GM12878 (cell line): ENCODE measurements at regions of chr9 and their contacts with region 1.

Region 1: GRCh38 chr9:123102375-123103110 is 69.1 kb downstream of the GPR21 start:
- DNase-seq: no peak
- ATAC-seq: 0 out of 3 replicates have a peak, but pooled peaks have one; percentile 20
- H3K4me3 ChIP-seq: no peak overlapping the region
- H3K27ac ChIP-seq: no peak overlapping the region
- H3K4me1 ChIP-seq: no peaks in the 10 kb centered on the region
- H3K27me3 ChIP-seq: no peaks in the 10 kb centered on the region
- CTCF ChIP-seq: peak; percentile 17 to 34 (median 22); a peak in 3 of 6 replicates
- EP300 ChIP-seq: no peak
- POLR2A ChIP-seq: no peak
- RAD21 ChIP-seq: peak; percentile 42

Region 2: DNA sequence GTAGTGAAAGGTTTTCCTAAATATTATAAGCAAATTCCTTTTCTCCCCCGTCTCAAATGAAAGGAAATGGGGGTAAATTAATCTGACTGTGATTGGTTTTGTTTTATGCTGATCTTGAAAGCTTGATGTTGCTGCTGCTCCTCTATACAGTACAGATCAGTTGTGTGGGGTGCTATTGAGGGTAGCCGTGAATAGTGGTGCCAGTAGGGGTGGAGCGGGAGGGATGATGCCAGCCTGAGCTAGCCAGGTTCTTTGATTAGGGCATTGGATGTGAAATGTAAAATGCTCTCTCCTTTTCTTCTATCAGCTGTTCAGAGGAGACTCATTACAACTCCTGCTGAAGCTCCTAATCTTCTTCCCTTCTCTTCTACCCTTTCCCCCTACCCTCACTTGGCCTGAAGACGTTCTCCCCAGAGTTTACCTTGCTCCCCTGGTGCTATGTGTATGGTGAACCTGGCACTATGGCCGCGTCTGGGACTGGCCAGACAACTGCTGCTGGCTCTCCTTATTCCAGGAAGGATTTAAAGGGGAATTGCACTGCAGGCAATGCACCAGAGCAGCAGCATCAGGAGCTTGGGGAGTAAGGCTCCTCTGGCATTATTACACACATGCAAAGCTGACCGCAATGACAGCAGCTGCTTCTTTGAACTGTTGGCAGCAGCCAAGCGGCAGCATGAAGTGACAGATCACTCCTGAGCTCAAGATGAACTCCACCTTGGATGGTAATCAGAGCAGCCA is 68.5 kb before region 1 on chr9:
- CTCF ChIA-PET with region 1: no interaction called
- POLR2A ChIA-PET with region 1: no interaction called
- RAD21 ChIA-PET with region 1: no interaction called
- SMC1A ChIA-PET with region 1: no interaction called
- in situ Hi-C with region 1: no loop called
- intact Hi-C with region 1: no loop called
- DNase-seq: no peak
- ATAC-seq: no peak
- H3K4me3 ChIP-seq: no peak overlapping the region
- H3K27ac ChIP-seq: no peak overlapping the region
- H3K4me1 ChIP-seq: no peaks in the 10 kb centered on the region
- H3K27me3 ChIP-seq: no peaks in the 10 kb centered on the region
- CTCF ChIP-seq: no peak
- EP300 ChIP-seq: no peak
- POLR2A ChIP-seq: no peak
- RAD21 ChIP-seq: no peak

Region 3: DNA sequence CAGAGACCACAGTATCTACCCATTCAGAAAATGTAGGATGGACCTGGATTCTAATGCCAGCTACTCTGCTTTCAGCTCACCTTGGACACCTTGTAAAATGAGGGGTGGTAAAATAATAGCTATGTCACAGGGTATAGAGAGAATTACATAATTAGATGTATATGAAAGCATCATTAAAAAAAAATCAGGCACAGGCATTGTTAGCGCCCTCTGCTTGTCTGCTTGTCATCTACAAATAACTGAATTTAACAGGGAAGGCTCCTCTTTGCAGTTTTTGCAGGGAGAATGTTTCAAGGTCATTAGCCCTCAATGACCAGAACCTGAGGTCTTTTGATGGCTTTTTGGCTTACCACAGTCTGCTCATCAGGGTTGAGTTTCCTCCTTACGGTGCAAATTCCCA is 11.1 kb before region 1 on chr9:
- CTCF ChIA-PET with region 1: interaction called, 18 read pairs
- POLR2A ChIA-PET with region 1: interaction called, 5 read pairs
- RAD21 ChIA-PET with region 1: interaction called, 7 read pairs
- SMC1A ChIA-PET with region 1: interaction called, 13 read pairs
- in situ Hi-C with region 1: no loop called
- intact Hi-C with region 1: no loop called
- DNase-seq: no peak
- ATAC-seq: no peak
- H3K4me3 ChIP-seq: no peak overlapping the region
- H3K27ac ChIP-seq: no peak overlapping the region
- H3K4me1 ChIP-seq: peaks cover 8% of the 10 kb centered on the region
- H3K27me3 ChIP-seq: no peaks in the 10 kb centered on the region
- CTCF ChIP-seq: peak in 2 of 3 experiments; percentile 6 to 15; a peak in 2 of 6 replicates
- EP300 ChIP-seq: no peak
- POLR2A ChIP-seq: no peak
- RAD21 ChIP-seq: 0 out of 2 replicates have a peak, but pooled peaks have one; percentile 10

Region 4: GRCh38 chr9:123201083-123201482 is 98.5 kb after region 1 on chr9:
- CTCF ChIA-PET with region 1: no interaction called
- POLR2A ChIA-PET with region 1: no interaction called
- RAD21 ChIA-PET with region 1: no interaction called
- SMC1A ChIA-PET with region 1: no interaction called
- in situ Hi-C with region 1: no loop called
- intact Hi-C with region 1: no loop called
- DNase-seq: no peak
- ATAC-seq: no peak
- H3K4me3 ChIP-seq: no peak overlapping the region
- H3K27ac ChIP-seq: no peak overlapping the region
- H3K4me1 ChIP-seq: no peaks in the 10 kb centered on the region
- H3K27me3 ChIP-seq: no peaks in the 10 kb centered on the region
- CTCF ChIP-seq: no peak
- EP300 ChIP-seq: no peak
- POLR2A ChIP-seq: no peak
- RAD21 ChIP-seq: no peak